Dendritic cell treated with granulocyte-macrophage colony-stimulating factor and Interleukin-4, amounts not matched to agents 40 ng/mL and 50 ng/mL, for 4 days (primary cell): ENCODE measurements at regions of chrX and their contacts with region 1.

Region 1: GRCh38 chrX:48696301-48697181 is at the start of gene SUV39H1:
- H3K4me3 Mint-ChIP-seq: peak within 1 kb of the TSS; percentile 86
- H3K27ac Mint-ChIP-seq: peak within 1 kb of the TSS; percentile 97
- H3K4me1 Mint-ChIP-seq: peaks cover 31% of the 10 kb centered on the region
- H3K27me3 Mint-ChIP-seq: no peaks in the 10 kb centered on the region

Region 2: GRCh38 chrX:48683411-48683982 is 13.0 kb before region 1 on chrX and contains the start of gene WAS:
- intact Hi-C with region 1: loop called (anchors 1 kb)
- H3K4me3 Mint-ChIP-seq: peak within 1 kb of the TSS; percentile 99
- H3K27ac Mint-ChIP-seq: peak within 1 kb of the TSS; percentile 99
- H3K4me1 Mint-ChIP-seq: peaks cover 80% of the 10 kb centered on the region
- H3K27me3 Mint-ChIP-seq: no peaks in the 10 kb centered on the region

Region 3: GRCh38 chrX:48737213-48737938 is 40.8 kb after region 1 on chrX:
- intact Hi-C with region 1: loop called (anchors 1 kb)
- H3K4me3 Mint-ChIP-seq: peak overlapping the region; percentile 89
- H3K27ac Mint-ChIP-seq: peak overlapping the region; percentile 98
- H3K4me1 Mint-ChIP-seq: peaks cover 13% of the 10 kb centered on the region
- H3K27me3 Mint-ChIP-seq: no peaks in the 10 kb centered on the region

Region 4: GRCh38 chrX:48786341-48786800 is 89.8 kb after region 1 on chrX and contains the start of gene GATA1:
- intact Hi-C with region 1: no loop called
- H3K4me3 Mint-ChIP-seq: no peak within 1 kb of the TSS
- H3K27ac Mint-ChIP-seq: no peak within 1 kb of the TSS
- H3K4me1 Mint-ChIP-seq: peaks cover 15% of the 10 kb centered on the region
- H3K27me3 Mint-ChIP-seq: peaks cover 13% of the 10 kb centered on the region